Thyroid gland (tissue), 4 donors: ENCODE measurements at regions of chr12 and their contacts with region 1.

Region 1: DNA sequence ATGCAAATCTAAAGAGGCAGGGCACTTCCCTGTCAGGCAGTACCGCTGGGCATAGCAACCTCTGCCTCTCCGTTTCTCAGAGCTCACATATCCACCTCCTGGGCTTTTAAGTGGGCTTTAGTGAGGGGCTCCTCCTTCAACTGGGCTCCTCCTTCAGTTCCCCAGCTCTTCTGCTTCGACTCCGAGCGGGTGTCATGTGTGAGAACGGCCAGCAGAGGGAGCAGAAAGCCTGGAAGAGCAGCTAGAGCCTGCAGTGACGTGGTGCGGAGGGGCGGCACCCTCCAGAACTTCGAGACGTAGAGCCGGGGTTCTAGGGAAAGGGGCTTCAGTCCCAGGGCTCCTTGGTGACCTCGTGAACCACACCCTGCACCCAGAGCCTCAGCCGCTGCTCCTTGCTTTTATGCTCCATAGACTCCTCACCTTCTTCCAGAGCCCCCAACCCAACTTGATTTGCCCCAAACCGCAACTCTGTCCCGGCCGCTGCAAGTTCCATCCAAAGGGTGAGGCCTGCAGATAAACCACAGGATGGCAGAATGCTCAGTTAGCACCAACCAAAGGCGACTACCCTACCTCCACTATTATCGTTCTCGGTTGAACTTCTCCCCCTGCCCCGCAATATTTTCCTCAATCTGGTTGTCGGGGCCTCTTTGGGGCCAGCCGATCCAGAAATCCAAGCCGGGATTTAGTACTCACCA is 383 bp upstream of the GLI1 start:
- DNase-seq: peak; percentile 91 to 94
- H3K4me3 ChIP-seq: peak overlapping the region; percentile 7 to 82 (median 71)
- H3K27ac ChIP-seq: peak overlapping the region; percentile 44 to 59 (median 49)
- H3K4me1 ChIP-seq: peaks cover 21 to 23% of the 10 kb centered on the region in 2 donors
- H3K27me3 ChIP-seq: no peaks in the 10 kb centered on the region
- CTCF ChIP-seq: peak; percentile 90 to 98 (median 96)
- POLR2A ChIP-seq: peak in 1 of 2 donors; percentile 20

Region 2: DNA sequence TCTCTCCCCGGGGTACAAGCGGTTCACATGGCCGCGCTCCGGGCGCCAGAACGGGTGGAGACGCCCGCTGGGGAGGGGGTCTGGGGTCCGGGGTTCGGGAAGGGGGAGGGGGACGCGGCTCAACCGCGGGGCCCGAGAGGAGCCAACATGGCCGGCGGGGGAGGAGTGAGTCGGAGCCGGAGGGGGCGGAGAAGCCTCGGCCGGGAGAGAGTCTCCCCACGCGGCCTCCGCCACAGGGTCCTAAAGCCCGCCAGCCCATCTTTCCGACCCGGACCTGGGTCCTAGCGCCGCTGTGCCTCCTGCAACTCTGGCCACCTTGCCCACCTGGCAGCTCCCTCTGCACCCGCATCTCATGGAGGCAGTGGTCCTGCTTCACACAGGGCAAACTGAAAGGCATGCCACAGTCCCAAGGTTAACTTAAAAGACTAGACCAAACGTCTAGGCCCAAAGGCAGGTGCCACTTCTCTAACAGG is 829.0 kb before region 1 on chr12 and contains the start of gene BAZ2A:
- intact Hi-C with region 1: no loop called
- DNase-seq: peak; percentile 90
- H3K4me3 ChIP-seq: peak within 1 kb of the TSS; percentile 97 to 99 (median 97)
- H3K27ac ChIP-seq: peak within 1 kb of the TSS; percentile 86 to 97 (median 93)
- H3K4me1 ChIP-seq: peaks cover 32 to 55% of the 10 kb centered on the region in 2 donors
- H3K27me3 ChIP-seq: no peaks in the 10 kb centered on the region
- CTCF ChIP-seq: peak in 1 of 6 experiments; percentile 19
- POLR2A ChIP-seq: peak in 1 of 2 donors; percentile 33
- total RNA-seq, gene BAZ2A: 61.7 to 122 (median 77.6) TPM

Region 3: DNA sequence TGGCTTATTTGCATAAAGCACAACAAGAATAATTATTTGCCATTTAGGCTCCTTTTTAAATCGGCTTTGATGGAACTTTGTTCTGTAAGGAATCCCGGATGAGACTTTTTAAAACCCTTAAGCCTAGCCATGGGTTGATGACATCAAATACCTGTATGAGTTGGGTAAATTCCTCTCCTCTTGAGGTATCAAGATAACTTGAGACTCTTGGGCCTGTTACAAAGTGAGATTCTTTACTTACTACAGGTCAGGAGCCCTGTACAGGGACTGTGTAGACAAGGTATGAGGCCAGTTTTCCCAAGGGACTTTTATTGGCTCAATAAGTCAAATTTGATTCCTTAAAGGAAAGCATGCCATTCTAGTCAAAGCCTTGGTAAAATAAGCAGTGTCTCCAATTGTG is 627.3 kb before region 1 on chr12:
- intact Hi-C with region 1: no loop called
- DNase-seq: no peak
- H3K4me3 ChIP-seq: no peak overlapping the region
- H3K27ac ChIP-seq: no peak overlapping the region
- H3K4me1 ChIP-seq: peaks cover 14 to 24% of the 10 kb centered on the region in 2 donors
- H3K27me3 ChIP-seq: no peaks in the 10 kb centered on the region
- CTCF ChIP-seq: no peak
- POLR2A ChIP-seq: no peak

Region 4: DNA sequence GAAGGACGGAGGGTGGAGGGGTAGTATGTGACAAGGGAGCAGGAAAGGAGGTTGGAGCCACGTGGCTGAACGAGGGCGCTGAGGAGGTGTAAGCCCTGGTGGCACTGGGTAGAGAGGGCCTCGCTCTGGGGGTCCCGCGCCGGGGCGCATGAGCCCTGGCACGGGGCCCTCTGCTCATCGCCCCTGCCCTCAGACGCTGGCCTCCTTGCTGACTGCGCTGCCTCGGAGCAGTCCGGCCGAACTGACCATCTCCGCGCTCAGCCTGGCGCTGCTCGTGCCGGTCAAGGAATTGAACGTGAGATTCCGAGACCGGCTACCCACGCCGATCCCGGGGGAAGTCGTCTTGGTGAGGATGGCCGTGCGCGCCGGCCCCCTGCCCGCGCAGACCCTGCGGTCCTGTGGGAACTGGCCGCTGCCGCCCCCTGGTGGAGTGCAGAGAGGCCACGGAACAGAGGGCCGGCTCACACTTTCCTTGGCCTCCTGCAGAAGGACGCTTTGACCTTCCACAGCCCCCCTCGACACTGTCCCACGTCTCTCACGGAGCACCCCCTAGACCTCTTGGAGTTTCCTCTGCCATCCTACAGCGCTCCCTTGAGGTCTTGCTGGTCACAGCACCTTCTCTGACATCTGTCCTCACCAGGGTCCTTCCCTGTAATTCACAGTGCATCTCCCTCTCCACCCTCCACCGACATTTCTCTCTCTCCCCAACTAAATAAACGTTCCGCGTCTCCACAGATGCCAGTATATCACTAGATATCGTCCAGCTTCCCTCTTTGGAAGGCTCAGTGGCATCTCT is 162.5 kb after region 1 on chr12:
- intact Hi-C with region 1: loop called (anchors 5 kb)
- DNase-seq: peak; percentile 59
- H3K4me3 ChIP-seq: peak overlapping the region in 1 of 3 donors; percentile 1
- H3K27ac ChIP-seq: no peak overlapping the region
- H3K4me1 ChIP-seq: peaks cover 6 to 20% of the 10 kb centered on the region in 2 donors
- H3K27me3 ChIP-seq: peaks cover 31% of the 10 kb centered on the region
- CTCF ChIP-seq: peak; percentile 74 to 91 (median 85)
- POLR2A ChIP-seq: no peak